ENCODE measurements at regions of chr2 and their contacts with region 1.

Region 1: GRCh38 chr2:68282811-68283418 is 30.6 kb upstream of the PPP3R1 start:
- DNase-seq: no peak
- H3K4me3 ChIP-seq: no peak overlapping the region
- H3K27ac ChIP-seq: no peak overlapping the region
- H3K4me1 ChIP-seq: peaks cover 0 to 6% (median 2%) of the 10 kb centered on the region in 4 donors
- H3K27me3 ChIP-seq: no peaks in the 10 kb centered on the region
- CTCF ChIP-seq: peak; percentile 67 to 75 (median 75)
- EP300 ChIP-seq: no peak
- POLR2A ChIP-seq: no peak

Region 2: DNA sequence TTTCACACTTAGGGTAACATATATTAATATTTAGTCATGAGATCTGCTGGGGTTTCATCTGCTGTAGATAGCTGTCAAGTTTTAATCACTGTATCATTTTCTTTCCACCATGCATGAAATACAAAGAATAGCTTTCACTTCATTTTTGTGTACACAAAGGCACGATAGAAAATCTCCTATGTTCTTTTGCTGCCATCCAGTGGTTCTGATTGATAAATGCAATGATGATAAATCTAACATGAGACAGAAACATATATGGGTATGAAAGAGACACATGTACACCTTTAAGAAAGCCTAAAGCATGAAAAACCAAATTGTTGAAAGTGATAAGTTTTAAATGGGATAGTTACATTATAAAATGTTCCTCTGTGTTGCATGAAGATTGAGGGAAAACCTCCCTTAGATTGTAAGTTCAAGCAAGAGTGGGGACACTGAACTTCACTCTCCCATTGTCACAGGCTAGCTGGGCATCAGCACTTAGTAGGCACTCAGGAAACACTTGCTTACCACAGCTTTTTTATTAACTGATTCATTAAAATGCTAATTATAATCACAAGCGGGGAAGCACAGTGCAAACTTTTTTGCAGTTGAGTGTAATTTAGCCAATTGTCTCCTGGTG is 251.3 kb before region 1 on chr2:
- in situ Hi-C with region 1: no loop called
- intact Hi-C with region 1: no loop called
- DNase-seq: no peak
- H3K4me3 ChIP-seq: no peak overlapping the region
- H3K27ac ChIP-seq: no peak overlapping the region
- H3K4me1 ChIP-seq: peaks cover 0 to 6% (median 0%) of the 10 kb centered on the region in 4 donors
- H3K27me3 ChIP-seq: no peaks in the 10 kb centered on the region
- CTCF ChIP-seq: peak; percentile 54 to 61 (median 59)
- EP300 ChIP-seq: no peak
- POLR2A ChIP-seq: no peak

Region 3: DNA sequence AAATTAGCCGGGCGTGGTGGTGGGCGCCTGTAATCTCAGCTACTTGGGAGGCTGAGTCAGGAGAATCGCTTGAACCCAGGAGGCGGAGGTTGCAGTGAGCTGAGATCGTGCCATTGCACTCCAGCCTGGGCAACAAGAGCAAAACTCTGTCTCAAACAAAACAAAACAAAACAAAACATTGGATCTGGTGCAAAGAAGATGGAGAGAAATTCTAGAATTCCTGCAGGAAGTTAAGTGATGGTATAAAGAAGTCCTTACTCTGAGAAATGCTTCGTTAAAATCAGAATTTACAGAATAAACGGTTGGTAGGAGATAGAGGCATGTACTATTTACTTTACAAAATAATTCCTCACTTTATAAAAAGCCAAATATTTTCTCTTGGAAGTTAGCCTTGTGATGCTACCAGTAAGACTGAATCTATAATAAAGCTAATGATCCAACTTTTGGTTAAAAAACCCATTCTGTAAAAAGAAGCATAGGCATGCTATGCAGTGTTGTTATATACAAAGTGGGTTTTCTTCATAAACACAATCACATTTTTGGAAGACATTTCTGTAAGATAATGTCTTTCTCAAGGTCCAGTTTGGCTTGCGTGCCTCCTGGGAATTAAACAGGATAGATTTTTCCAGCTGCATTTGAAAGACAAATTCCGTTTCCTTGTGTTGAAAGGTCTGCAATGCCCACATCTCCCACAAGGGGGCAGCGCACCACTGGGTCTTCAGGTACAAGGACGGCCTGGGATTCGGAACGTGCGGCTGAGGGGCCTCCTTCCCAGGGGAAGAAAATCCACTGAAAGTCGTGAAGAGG is 160.8 kb before region 1 on chr2:
- in situ Hi-C with region 1: loop called in 3 of 4 experiments (anchors 10 kb)
- intact Hi-C with region 1: loop called (anchors 10 kb)
- DNase-seq: peak; percentile 90
- H3K4me3 ChIP-seq: no peak overlapping the region
- H3K27ac ChIP-seq: peak overlapping the region in 2 of 4 donors; percentile 3 to 69
- H3K4me1 ChIP-seq: peaks cover 0 to 13% (median 5%) of the 10 kb centered on the region in 4 donors
- H3K27me3 ChIP-seq: no peaks in the 10 kb centered on the region
- CTCF ChIP-seq: peak; percentile 92 to 97 (median 96)
- EP300 ChIP-seq: no peak
- POLR2A ChIP-seq: no peak

Region 4: GRCh38 chr2:68141875-68142274 is 141.0 kb before region 1 on chr2:
- in situ Hi-C with region 1: loop called in 1 of 4 experiments (anchors 10 kb)
- intact Hi-C with region 1: no loop called
- DNase-seq: no peak
- H3K4me3 ChIP-seq: no peak overlapping the region
- H3K27ac ChIP-seq: no peak overlapping the region
- H3K4me1 ChIP-seq: no peaks in the 10 kb centered on the region
- H3K27me3 ChIP-seq: no peaks in the 10 kb centered on the region
- CTCF ChIP-seq: no peak
- EP300 ChIP-seq: no peak
- POLR2A ChIP-seq: no peak